Activated CD4-positive, alpha-beta T cell treated with anti-CD3 and anti-CD28 coated beads for 36 hours (primary cell): ENCODE measurements at regions of chr5 and their contacts with region 1.

Region 1: GRCh38 chr5:77775790-77776553 is at the start of gene TBCA:
- DNase-seq: peak; percentile 92
- ATAC-seq: peak; percentile 88
- H3K4me3 Mint-ChIP-seq: peak within 1 kb of the TSS; percentile 98
- H3K27ac Mint-ChIP-seq: peak within 1 kb of the TSS; percentile 95
- H3K4me1 Mint-ChIP-seq: peaks cover 52% of the 10 kb centered on the region
- H3K27me3 Mint-ChIP-seq: no peaks in the 10 kb centered on the region
- total RNA-seq, gene TBCA: 195 to 210 TPM

Region 2: GRCh38 chr5:76942581-76942980 is 833.4 kb before region 1 on chr5:
- CTCF ChIA-PET with region 1: no interaction called
- POLR2A ChIA-PET with region 1: no interaction called
- intact Hi-C with region 1: no loop called
- DNase-seq: no peak
- ATAC-seq: no peak
- H3K4me3 Mint-ChIP-seq: no peak overlapping the region
- H3K27ac Mint-ChIP-seq: no peak overlapping the region
- H3K4me1 Mint-ChIP-seq: no peaks in the 10 kb centered on the region
- H3K27me3 Mint-ChIP-seq: peaks cover 2% of the 10 kb centered on the region

Region 3: DNA sequence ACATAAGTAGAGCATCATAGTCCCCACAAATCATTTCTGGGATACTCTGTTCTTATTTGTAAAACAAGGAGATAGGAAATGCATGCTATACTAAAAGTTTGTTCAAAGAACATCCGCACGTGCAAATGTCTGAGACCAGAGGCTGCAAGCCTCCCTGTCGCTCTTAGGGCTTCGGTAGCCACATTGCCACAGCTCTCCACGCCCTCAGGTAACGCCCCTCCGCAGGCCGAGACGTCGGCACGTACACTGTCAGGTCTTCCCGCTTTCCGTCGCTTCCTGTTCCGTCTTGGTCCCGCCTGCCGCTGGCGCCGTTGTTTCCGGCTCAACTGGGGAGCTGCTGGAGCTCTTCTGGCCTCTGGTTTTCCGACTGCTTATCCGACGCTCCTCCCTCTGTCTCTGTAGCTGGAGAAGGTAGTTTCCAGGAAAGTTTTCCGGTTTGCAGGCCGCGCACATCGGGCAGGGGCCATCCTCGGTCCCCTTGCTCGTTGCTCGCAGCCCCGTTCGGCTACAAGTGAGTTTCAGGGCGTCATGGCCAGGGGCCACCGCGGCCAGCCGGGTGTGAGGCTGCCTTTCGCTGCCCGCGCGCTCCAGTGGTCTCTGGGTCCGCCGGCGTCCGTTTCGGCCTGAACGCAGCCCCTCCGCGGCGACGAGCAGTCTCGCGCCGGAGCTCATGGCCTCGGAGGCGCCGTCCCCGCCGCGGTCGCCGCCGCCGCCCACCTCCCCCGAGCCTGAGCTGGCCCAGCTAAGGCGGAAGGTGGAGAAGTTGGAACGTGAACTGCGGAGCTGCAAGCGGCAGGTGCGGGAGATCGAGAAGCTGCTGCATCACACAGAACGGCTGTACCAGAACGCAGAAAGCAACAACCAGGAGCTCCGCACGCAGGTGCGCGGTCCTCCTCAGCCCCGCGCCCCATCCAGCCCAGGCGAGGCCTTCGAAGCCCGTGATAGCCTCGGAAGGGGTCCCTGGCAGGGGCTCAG is 745.6 kb before region 1 on chr5 and contains the start of gene AGGF1:
- CTCF ChIA-PET with region 1: no interaction called
- POLR2A ChIA-PET with region 1: no interaction called
- intact Hi-C with region 1: loop called in 1 of 2 experiments (anchors 2 kb)
- DNase-seq: peak; percentile 96
- ATAC-seq: peak; percentile 98
- H3K4me3 Mint-ChIP-seq: peak within 1 kb of the TSS; percentile 87
- H3K27ac Mint-ChIP-seq: peak within 1 kb of the TSS; percentile 94
- H3K4me1 Mint-ChIP-seq: peaks cover 30% of the 10 kb centered on the region
- H3K27me3 Mint-ChIP-seq: no peaks in the 10 kb centered on the region
- total RNA-seq, gene AGGF1: 25.5 to 33.2 TPM

Region 4: DNA sequence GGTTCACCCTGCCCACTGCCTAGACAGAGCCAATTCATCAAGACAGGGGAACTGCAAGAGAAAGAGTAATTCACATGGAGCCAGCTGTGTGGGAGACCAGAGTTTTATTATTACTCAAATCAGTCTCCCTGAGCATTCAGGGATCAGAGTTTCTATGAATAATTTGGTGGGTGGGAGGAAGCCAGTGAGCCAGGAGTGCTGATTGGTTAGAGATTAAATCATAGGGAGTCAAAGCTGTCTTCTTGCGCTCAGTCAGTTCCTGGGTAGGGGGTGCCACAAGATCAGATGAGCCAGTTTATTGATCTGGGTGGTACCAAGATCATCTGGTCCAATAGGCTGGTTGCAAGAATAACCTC is 24.3 kb before region 1 on chr5:
- CTCF ChIA-PET with region 1: no interaction called
- POLR2A ChIA-PET with region 1: no interaction called
- intact Hi-C with region 1: loop called in 1 of 2 experiments (anchors 1 kb)
- DNase-seq: peak; percentile 51
- ATAC-seq: peak; percentile 81
- H3K4me3 Mint-ChIP-seq: no peak overlapping the region
- H3K27ac Mint-ChIP-seq: no peak overlapping the region
- H3K4me1 Mint-ChIP-seq: peaks cover 41% of the 10 kb centered on the region
- H3K27me3 Mint-ChIP-seq: no peaks in the 10 kb centered on the region

Region 5: GRCh38 chr5:77882670-77883257 is 106.8 kb after region 1 on chr5:
- CTCF ChIA-PET with region 1: no interaction called
- POLR2A ChIA-PET with region 1: no interaction called
- intact Hi-C with region 1: loop called in 1 of 2 experiments (anchors 2 kb)
- DNase-seq: peak; percentile 72
- ATAC-seq: peak; percentile 72
- H3K4me3 Mint-ChIP-seq: no peak overlapping the region
- H3K27ac Mint-ChIP-seq: peak overlapping the region; percentile 85
- H3K4me1 Mint-ChIP-seq: peaks cover 32% of the 10 kb centered on the region
- H3K27me3 Mint-ChIP-seq: peaks cover 18% of the 10 kb centered on the region

Region 6: GRCh38 chr5:78056901-78057513 is 281.0 kb after region 1 on chr5:
- CTCF ChIA-PET with region 1: no interaction called
- POLR2A ChIA-PET with region 1: no interaction called
- intact Hi-C with region 1: no loop called
- DNase-seq: no peak
- ATAC-seq: no peak
- H3K4me3 Mint-ChIP-seq: no peak overlapping the region
- H3K27ac Mint-ChIP-seq: no peak overlapping the region
- H3K4me1 Mint-ChIP-seq: no peaks in the 10 kb centered on the region
- H3K27me3 Mint-ChIP-seq: no peaks in the 10 kb centered on the region

Region 7: DNA sequence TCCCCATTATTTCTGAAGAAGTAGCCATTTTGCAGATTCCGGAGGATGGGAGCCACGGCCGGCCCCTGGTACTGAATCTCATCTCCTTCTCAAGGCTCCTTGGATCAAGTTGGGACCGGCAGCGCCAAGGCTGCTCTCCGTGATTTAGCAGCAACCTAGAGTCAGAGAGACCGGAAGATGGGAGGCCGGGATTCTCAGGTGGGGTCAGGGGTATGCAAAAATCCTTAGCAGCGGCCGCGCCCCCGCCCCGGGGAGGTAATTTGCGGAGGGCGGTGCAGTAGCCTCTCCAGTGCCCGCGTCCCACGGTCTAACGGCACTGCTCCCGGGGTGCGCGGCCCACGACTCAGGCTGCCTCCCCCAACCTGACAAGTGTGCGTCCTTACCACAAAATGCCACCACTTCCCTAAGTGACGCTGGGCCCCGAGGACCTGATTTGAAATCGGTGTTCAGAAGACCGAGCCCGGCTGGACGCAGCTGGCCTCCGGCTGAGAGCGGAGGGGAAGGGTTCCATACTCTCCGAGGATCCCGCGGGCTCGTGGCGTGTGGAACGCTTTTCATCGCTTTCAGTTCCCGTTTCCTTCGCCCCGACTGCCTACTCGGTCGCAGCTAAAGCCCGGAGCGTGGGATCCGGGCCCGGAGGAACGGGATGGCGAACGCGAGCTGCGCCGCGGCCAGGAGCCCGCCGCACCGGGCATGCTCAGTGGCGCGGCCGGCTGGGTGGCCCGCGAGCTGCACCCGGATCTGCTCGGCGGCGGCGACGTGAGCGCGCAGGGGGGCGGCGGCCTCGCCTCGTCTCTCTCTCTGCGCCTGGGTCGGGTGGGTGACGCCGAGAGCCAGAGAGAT is 584.1 kb after region 1 on chr5 and contains the start of gene SCAMP1:
- CTCF ChIA-PET with region 1: no interaction called
- POLR2A ChIA-PET with region 1: no interaction called
- intact Hi-C with region 1: loop called in 1 of 2 experiments (anchors 1 kb)
- DNase-seq: peak; percentile 95
- ATAC-seq: peak; percentile 94
- H3K4me3 Mint-ChIP-seq: peak within 1 kb of the TSS; percentile 94
- H3K27ac Mint-ChIP-seq: peak within 1 kb of the TSS; percentile 97
- H3K4me1 Mint-ChIP-seq: peaks cover 35% of the 10 kb centered on the region
- H3K27me3 Mint-ChIP-seq: no peaks in the 10 kb centered on the region
- total RNA-seq, gene SCAMP1: 15.5 to 24.1 TPM